Right ventricle myocardium superior (tissue), 1 donor: ENCODE measurements at regions of chr5 and their contacts with region 1.

Region 1: GRCh38 chr5:147935032-147935431 is 28.7 kb upstream of the C5orf46 start:
- DNase-seq: no peak
- ATAC-seq: peak; percentile 85

Region 2: GRCh38 chr5:147857302-147858129 is 77.5 kb before region 1 on chr5:
- intact Hi-C with region 1: loop called (anchors 2 kb)
- DNase-seq: peak; percentile 41
- ATAC-seq: no peak

Region 3: GRCh38 chr5:147887930-147888329 is 47.1 kb before region 1 on chr5:
- intact Hi-C with region 1: loop called (anchors 2 kb)
- DNase-seq: no peak
- ATAC-seq: no peak